ENCODE measurements at regions of chr22 and their contacts with region 1.

Region 1: DNA sequence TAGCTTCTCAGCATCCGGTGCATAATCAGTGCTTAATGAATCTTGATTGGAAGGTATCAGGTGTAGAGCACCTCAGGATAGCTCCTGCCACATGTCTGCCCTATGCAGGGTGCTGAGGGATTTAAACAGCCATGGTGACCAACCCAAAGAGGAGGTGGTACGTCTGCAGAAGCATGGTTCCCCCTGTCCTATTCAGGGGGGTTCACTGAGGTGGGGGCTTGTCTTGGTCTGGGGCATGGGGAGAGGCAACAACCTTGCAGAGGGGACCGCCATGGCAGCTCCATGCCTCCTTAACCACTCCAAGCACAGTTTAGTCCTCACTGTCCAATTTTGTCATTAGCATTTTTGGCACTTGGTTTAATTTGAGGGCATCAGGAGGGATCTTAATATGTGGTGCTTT is 24.9 kb downstream of the UBE2L3 start:
- DNase-seq: no peak
- H3K4me3 ChIP-seq: no peak overlapping the region
- H3K27me3 ChIP-seq: no peaks in the 10 kb centered on the region
- CTCF ChIP-seq: no peak

Region 2: DNA sequence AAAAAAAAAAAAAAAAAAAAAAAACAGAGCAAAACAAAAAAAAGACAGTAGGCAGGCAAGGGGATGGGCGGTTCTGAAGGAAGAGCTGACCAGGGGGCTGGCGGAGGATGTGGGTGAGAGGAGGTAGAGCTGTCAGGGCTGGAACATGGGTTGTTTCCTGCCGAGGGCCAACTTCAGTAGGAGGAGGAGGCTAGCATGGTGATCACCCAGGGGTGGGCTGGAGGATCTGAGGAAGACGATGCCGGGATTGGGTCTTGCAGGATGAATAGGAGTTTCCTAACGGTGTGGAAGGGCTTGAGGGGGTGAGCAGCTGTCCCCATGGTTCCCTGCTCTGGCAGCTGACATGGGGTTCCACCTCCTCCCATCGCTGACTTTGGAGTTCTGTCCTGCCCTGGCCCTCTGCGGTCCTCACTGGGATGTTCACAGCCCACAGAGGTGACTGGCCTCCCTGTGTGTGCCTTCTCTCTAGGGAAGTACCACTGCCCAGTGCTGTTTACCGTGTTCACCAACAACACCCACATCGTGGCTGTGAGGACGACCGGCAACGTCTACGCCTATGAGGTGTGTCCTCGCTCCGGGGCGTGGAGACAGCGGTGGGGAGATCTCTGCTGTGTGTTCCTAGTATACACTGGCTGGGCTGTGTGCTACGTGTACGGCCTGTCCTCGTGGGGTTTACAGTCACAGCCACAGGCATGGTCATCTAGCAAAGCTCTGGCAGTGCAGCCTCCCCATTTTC is 88.6 kb after region 1 on chr22:
- CTCF ChIA-PET with region 1: no interaction called
- POLR2A ChIA-PET with region 1: interaction called, 10 read pairs
- DNase-seq: no peak
- H3K4me3 ChIP-seq: no peak overlapping the region
- H3K27me3 ChIP-seq: no peaks in the 10 kb centered on the region
- CTCF ChIP-seq: no peak

Region 3: DNA sequence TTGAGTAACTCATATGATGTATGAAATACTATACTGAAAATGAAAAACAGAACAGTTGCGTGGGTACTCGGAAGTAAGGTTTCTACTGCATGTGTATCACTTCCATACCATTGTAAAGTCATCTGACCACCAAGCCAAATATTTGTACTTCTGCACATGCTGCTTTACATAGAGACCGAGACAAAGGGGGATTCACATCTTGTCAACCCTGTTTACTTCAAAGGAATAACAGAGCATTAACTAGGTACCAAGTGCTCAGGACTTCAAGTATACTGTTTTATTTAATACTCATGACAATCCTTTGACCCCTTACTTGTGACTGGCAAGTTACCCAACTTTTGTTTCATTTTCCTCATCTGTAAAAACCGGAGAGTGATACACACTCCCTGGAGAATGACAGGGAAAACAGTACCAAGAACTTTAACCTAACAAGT is 265.1 kb after region 1 on chr22:
- CTCF ChIA-PET with region 1: no interaction called
- POLR2A ChIA-PET with region 1: no interaction called
- DNase-seq: no peak
- H3K4me3 ChIP-seq: no peak overlapping the region
- H3K27me3 ChIP-seq: no peaks in the 10 kb centered on the region
- CTCF ChIP-seq: no peak

Measured in BJ (cell line).